H1 (cell line): ENCODE measurements at regions of chr5 and their contacts with region 1.

Region 1: GRCh38 chr5:43389679-43390329 is 22.4 kb downstream of the CCL28 start:
- DNase-seq: peak; percentile 46 to 50
- H3K4me3 ChIP-seq: no peak overlapping the region
- H3K27ac ChIP-seq: no peak overlapping the region
- H3K4me1 ChIP-seq: no peaks in the 10 kb centered on the region
- H3K27me3 ChIP-seq: peaks cover 0 to 1% (median 0%) of the 10 kb centered on the region in 4 experiments; a peak in 1 of 7 replicates
- CTCF ChIP-seq: peak in 2 of 3 experiments; percentile 82 to 84; a peak in 3 of 4 replicates
- EP300 ChIP-seq: no peak
- POLR2A ChIP-seq: no peak
- RAD21 ChIP-seq: peak; percentile 88 to 91

Region 2: GRCh38 chr5:43193181-43193893 is 196.5 kb before region 1 on chr5:
- CTCF ChIA-PET with region 1: interaction called, 11 read pairs
- POLR2A ChIA-PET with region 1: no interaction called
- DNase-seq: no peak
- H3K4me3 ChIP-seq: peak overlapping the region; percentile 34 to 70 (median 47); a peak in 7 of 8 replicates
- H3K27ac ChIP-seq: no peak overlapping the region
- H3K4me1 ChIP-seq: peaks cover 6 to 10% (median 8%) of the 10 kb centered on the region in 4 experiments
- H3K27me3 ChIP-seq: peaks cover 8 to 36% (median 29%) of the 10 kb centered on the region in 4 experiments; a peak in 6 of 7 replicates
- CTCF ChIP-seq: no peak
- EP300 ChIP-seq: no peak
- POLR2A ChIP-seq: no peak
- RAD21 ChIP-seq: no peak

Region 3: GRCh38 chr5:43227655-43228054 is 162.1 kb before region 1 on chr5:
- CTCF ChIA-PET with region 1: interaction called, 46 read pairs
- POLR2A ChIA-PET with region 1: no interaction called
- DNase-seq: no peak
- H3K4me3 ChIP-seq: no peak overlapping the region
- H3K27ac ChIP-seq: no peak overlapping the region
- H3K4me1 ChIP-seq: no peaks in the 10 kb centered on the region
- H3K27me3 ChIP-seq: no peaks in the 10 kb centered on the region
- CTCF ChIP-seq: peak in 1 of 3 experiments; percentile 34; a peak in 2 of 4 replicates
- EP300 ChIP-seq: no peak
- POLR2A ChIP-seq: no peak
- RAD21 ChIP-seq: peak; percentile 54 to 57

Region 4: DNA sequence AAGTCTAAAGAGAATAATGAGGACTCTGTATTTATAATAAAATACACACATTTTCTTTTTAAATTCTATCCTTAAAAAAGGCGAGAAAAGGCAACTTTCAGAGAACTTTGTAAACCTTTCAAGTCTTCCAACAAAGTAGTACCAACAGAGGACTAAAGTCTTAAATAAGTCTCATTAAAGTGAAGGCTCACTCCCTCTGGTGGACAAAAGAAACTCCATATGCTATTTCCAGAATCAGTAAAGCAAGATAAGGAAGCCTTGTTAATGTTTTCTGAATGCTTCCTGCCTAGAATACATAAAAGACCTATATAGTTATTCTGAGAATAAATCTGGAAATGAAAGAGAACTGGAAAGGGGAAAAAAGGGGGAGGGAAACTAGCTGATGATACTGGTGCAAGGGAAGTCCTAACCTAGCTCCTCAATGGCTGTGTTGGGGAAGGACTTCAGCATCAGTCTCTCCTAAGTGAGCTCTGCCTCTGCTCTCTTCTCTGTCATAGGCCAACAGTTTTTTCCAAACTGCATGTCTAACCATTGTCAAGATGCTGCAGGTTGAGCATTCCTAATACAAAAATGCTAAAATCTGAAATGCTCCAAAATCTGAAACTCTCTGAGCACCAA is 83.7 kb before region 1 on chr5:
- CTCF ChIA-PET with region 1: interaction called, 27 read pairs
- POLR2A ChIA-PET with region 1: no interaction called
- DNase-seq: no peak
- H3K4me3 ChIP-seq: no peak overlapping the region
- H3K27ac ChIP-seq: no peak overlapping the region
- H3K4me1 ChIP-seq: peaks cover 2 to 12% (median 8%) of the 10 kb centered on the region in 4 experiments; a peak in 6 of 7 replicates
- H3K27me3 ChIP-seq: no peaks in the 10 kb centered on the region
- CTCF ChIP-seq: peak in 2 of 3 experiments; percentile 18 to 52; a peak in 2 of 4 replicates
- EP300 ChIP-seq: no peak
- POLR2A ChIP-seq: no peak
- RAD21 ChIP-seq: peak; percentile 39 to 43

Region 5: GRCh38 chr5:43332396-43332795 is 57.4 kb before region 1 on chr5:
- CTCF ChIA-PET with region 1: no interaction called
- POLR2A ChIA-PET with region 1: no interaction called
- DNase-seq: no peak
- H3K4me3 ChIP-seq: no peak overlapping the region
- H3K27ac ChIP-seq: no peak overlapping the region
- H3K4me1 ChIP-seq: no peaks in the 10 kb centered on the region
- H3K27me3 ChIP-seq: no peaks in the 10 kb centered on the region
- CTCF ChIP-seq: no peak
- EP300 ChIP-seq: no peak
- POLR2A ChIP-seq: no peak
- RAD21 ChIP-seq: no peak

Region 6: GRCh38 chr5:43409809-43410271 is 20.0 kb after region 1 on chr5:
- CTCF ChIA-PET with region 1: interaction called, 13 read pairs
- POLR2A ChIA-PET with region 1: no interaction called
- DNase-seq: no peak
- H3K4me3 ChIP-seq: no peak overlapping the region
- H3K27ac ChIP-seq: no peak overlapping the region
- H3K4me1 ChIP-seq: no peaks in the 10 kb centered on the region
- H3K27me3 ChIP-seq: no peaks in the 10 kb centered on the region
- CTCF ChIP-seq: no peak
- EP300 ChIP-seq: no peak
- POLR2A ChIP-seq: no peak
- RAD21 ChIP-seq: no peak